ENCODE measurements at regions of chr20 and their contacts with region 1.

Region 1: GRCh38 chr20:2051946-2052345 is 49.7 kb upstream of the STK35 start:
- DNase-seq: no peak
- ATAC-seq: no peak
- H3K4me3 Mint-ChIP-seq: no peak overlapping the region
- H3K27ac Mint-ChIP-seq: no peak overlapping the region
- H3K4me1 Mint-ChIP-seq: no peaks in the 10 kb centered on the region
- H3K27me3 Mint-ChIP-seq: peaks cover 3% of the 10 kb centered on the region

Region 2: GRCh38 chr20:2135013-2135412 is 83.1 kb after region 1 on chr20:
- POLR2A ChIA-PET with region 1: interaction called, 10 read pairs
- DNase-seq: no peak
- ATAC-seq: no peak
- H3K4me3 Mint-ChIP-seq: no peak overlapping the region
- H3K27ac Mint-ChIP-seq: no peak overlapping the region
- H3K4me1 Mint-ChIP-seq: peaks cover 5% of the 10 kb centered on the region
- H3K27me3 Mint-ChIP-seq: no peaks in the 10 kb centered on the region

Measured in activated naive CD8-positive, alpha-beta T cell treated with anti-CD3 and anti-CD28 coated beads, Interleukin-2, amount 10 ng/mL, durations not matched to agents 7 days and 5 days (primary cell).